H1 (cell line): ENCODE measurements at regions of chr10 and their contacts with region 1.

Region 1: GRCh38 chr10:114876602-114877300 is 55.2 kb downstream of the FHIP2A start:
- DNase-seq: peak; percentile 71 to 87
- H3K4me3 ChIP-seq: no peak overlapping the region
- H3K27ac ChIP-seq: no peak overlapping the region
- H3K4me1 ChIP-seq: peaks cover 4 to 14% (median 6%) of the 10 kb centered on the region in 4 experiments
- H3K27me3 ChIP-seq: no peaks in the 10 kb centered on the region
- CTCF ChIP-seq: peak; percentile 88 to 97 (median 95)
- EP300 ChIP-seq: 0 out of 3 replicates have a peak, but pooled peaks of 1 of the 2 experiments have one; percentile 9
- POLR2A ChIP-seq: no peak
- RAD21 ChIP-seq: peak; percentile 98

Region 2: DNA sequence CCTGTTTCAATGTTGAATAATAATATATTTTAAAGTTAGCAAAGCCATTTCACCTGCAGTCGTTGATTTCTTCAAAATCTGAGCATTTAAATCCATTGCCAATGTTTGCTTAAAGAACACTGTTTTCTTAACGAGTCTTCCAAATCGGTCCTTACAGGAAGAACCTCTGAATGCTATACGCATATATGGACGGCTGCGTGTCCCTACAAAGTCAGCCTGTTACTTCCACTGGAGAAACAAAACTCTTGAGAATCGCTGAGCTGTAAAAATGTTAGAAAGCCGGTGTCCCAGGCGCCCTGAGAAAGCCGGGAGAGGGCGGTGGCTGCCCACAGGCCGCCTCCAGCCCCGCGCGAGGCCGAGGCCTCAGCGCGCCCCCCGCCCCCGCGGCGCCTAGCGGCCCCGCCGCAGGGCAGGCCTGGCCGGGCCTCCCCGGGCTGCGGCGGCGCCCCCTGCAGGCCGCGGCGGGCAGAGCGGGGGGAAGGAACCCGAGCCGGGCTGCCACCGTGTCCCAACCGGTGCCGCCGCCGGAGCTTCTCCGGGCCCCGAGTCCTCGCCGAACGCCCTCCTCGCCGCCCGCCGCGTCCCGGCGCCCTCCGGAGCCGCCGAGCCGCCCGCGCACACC is 55.3 kb before region 1 on chr10 and contains the start of gene FHIP2A:
- CTCF ChIA-PET with region 1: interaction called, 16 read pairs
- POLR2A ChIA-PET with region 1: no interaction called
- DNase-seq: peak; percentile 19 to 93
- H3K4me3 ChIP-seq: peak within 1 kb of the TSS; percentile 62 to 96 (median 80)
- H3K27ac ChIP-seq: peak within 1 kb of the TSS; percentile 77; the same call in 1 of the 2 replicates
- H3K4me1 ChIP-seq: peaks cover 0 to 5% (median 0%) of the 10 kb centered on the region in 4 experiments; a peak in 1 of 7 replicates
- H3K27me3 ChIP-seq: no peaks in the 10 kb centered on the region
- CTCF ChIP-seq: peak; percentile 56 to 79 (median 75)
- EP300 ChIP-seq: no peak
- POLR2A ChIP-seq: no peak
- RAD21 ChIP-seq: peak; percentile 26 to 52
- total RNA-seq, gene FHIP2A: 14.0 and 15.0 TPM in 2 replicates

Region 3: GRCh38 chr10:114917927-114918672 is 41.3 kb after region 1 on chr10:
- CTCF ChIA-PET with region 1: interaction called, 23 read pairs
- POLR2A ChIA-PET with region 1: interaction called, 3 read pairs
- DNase-seq: no peak
- H3K4me3 ChIP-seq: peak overlapping the region in 1 of 4 experiments; percentile 23; a peak in 1 of 8 replicates
- H3K27ac ChIP-seq: no peak overlapping the region
- H3K4me1 ChIP-seq: peaks cover 0 to 12% (median 3%) of the 10 kb centered on the region in 4 experiments; a peak in 3 of 7 replicates
- H3K27me3 ChIP-seq: no peaks in the 10 kb centered on the region
- CTCF ChIP-seq: no peak
- EP300 ChIP-seq: no peak; a peak in 1 of 3 replicates
- POLR2A ChIP-seq: no peak
- RAD21 ChIP-seq: no peak

Region 4: DNA sequence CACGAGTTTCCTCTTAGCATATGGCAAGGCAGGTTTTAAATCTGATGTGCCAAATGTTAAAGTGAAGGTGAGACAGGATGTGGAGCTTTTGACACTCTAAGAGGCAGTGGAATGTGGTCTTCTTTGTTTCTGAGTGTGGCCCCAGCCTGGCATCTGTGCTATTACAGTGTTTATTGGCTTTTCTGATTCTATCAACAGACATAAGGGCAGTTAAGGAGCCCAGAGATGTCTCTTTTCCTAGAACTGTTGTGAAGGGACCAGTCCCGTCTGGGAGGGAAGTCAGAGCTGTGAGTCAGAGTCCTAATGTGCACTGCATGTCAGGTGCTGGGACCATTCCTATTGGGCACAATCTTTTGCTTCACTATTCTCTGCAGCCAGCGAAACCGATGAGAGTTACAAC is 93.8 kb after region 1 on chr10:
- CTCF ChIA-PET with region 1: interaction called, 16 read pairs
- POLR2A ChIA-PET with region 1: no interaction called
- DNase-seq: peak in 1 of 2 experiments; percentile 9
- H3K4me3 ChIP-seq: no peak overlapping the region
- H3K27ac ChIP-seq: no peak overlapping the region
- H3K4me1 ChIP-seq: peaks cover 0 to 8% (median 4%) of the 10 kb centered on the region in 4 experiments; a peak in 4 of 7 replicates
- H3K27me3 ChIP-seq: no peaks in the 10 kb centered on the region
- CTCF ChIP-seq: no peak
- EP300 ChIP-seq: no peak
- POLR2A ChIP-seq: no peak
- RAD21 ChIP-seq: no peak

Region 5: GRCh38 chr10:115049957-115050356 is 173.2 kb after region 1 on chr10:
- CTCF ChIA-PET with region 1: interaction called, 91 read pairs
- POLR2A ChIA-PET with region 1: no interaction called
- DNase-seq: no peak
- H3K4me3 ChIP-seq: no peak overlapping the region
- H3K27ac ChIP-seq: no peak overlapping the region
- H3K4me1 ChIP-seq: peaks cover 0 to 2% (median 0%) of the 10 kb centered on the region in 4 experiments; a peak in 2 of 7 replicates
- H3K27me3 ChIP-seq: no peaks in the 10 kb centered on the region
- CTCF ChIP-seq: no peak
- EP300 ChIP-seq: no peak
- POLR2A ChIP-seq: no peak
- RAD21 ChIP-seq: no peak

Region 6: DNA sequence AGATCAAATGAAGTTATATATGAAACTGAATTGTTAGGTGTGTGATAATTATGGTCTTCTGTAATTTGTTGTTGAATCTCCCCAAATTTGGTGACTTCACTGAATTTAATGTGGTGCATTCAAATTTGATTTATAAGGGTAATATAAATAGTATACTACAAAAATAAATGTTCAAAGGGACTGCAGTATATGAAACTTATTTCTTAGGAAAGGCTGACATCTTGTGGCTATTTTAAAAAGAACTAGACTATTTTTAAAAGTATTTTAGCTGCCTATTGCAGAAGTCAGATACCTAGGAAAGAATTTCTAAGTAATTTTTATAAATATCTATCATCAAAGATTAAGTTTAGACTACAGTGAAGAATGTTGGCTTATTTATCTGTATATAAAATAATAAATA is 253.0 kb after region 1 on chr10:
- CTCF ChIA-PET with region 1: interaction called, 96 read pairs
- POLR2A ChIA-PET with region 1: no interaction called
- DNase-seq: no peak
- H3K4me3 ChIP-seq: no peak overlapping the region
- H3K27ac ChIP-seq: no peak overlapping the region
- H3K4me1 ChIP-seq: no peaks in the 10 kb centered on the region
- H3K27me3 ChIP-seq: no peaks in the 10 kb centered on the region
- CTCF ChIP-seq: no peak; a peak in 1 of 4 replicates
- EP300 ChIP-seq: no peak
- POLR2A ChIP-seq: no peak
- RAD21 ChIP-seq: peak in 1 of 2 experiments; percentile 55